ENCODE measurements at regions of chr12 and their contacts with region 1.

Region 1: DNA sequence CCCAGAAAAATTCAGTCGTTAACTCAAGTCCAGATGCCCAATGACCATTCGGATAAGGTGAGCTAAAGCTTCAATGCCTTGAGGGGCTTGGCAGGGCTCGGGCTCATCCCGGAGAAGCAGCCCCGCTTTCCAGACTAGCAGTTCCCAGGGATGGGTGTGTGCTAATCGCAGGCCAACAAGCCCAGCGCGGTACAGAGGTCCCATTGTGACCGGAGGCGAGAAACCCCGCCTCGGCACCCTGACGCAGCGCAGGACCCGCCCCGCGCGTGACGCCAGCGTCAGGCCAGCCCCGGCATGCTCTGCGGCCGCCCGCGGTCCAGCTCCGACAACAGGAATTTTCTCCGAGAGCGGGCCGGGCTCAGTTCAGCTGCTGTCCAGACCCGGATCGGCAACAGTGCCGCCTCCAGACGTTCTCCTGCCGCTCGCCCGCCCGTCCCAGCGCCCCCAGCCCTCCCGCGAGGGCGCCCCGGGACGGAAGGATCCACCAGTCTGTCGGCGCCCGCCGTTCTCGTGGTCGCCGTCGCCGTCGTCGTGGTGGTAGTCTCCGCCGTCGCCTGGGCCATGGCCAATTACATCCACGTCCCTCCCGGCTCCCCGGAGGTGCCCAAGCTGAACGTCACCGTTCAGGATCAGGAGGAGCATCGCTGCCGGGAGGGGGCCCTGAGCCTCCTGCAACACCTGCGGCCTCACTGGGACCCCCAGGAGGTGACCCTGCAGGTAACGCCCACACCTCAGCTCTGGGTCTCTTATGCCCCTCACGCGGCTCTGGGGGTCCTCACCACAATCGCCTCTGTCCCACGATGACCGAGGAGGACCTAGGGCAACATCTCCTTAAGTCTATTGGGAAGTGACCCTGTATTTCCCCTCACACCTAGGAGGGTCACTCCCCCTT is at the start of gene ETNK1:
- DNase-seq: peak; percentile 70 to 90 (median 83)
- ATAC-seq: peak; percentile 93
- H3K4me3 ChIP-seq: peak within 1 kb of the TSS; percentile 84 to 98
- H3K4me3 Mint-ChIP-seq: peak within 1 kb of the TSS; percentile 99
- H3K27ac ChIP-seq: peak within 1 kb of the TSS; percentile 82 to 93
- H3K27ac Mint-ChIP-seq: peak within 1 kb of the TSS; percentile 99
- H3K4me1 ChIP-seq: peaks cover 28% of the 10 kb centered on the region
- H3K4me1 Mint-ChIP-seq: peaks cover 44% of the 10 kb centered on the region
- H3K27me3 ChIP-seq: peaks cover 0 to 2% of the 10 kb centered on the region in 2 experiments
- H3K27me3 Mint-ChIP-seq: peaks cover 2% of the 10 kb centered on the region
- CTCF ChIP-seq: no peak
- total RNA-seq, gene ETNK1: 17.1 to 23.3 TPM

Region 2: GRCh38 chr12:21501379-21501956 is 1123.6 kb before region 1 on chr12 and contains the starts of genes GOLT1B and RECQL:
- CTCF ChIA-PET with region 1: no interaction called
- POLR2A ChIA-PET with region 1: no interaction called
- intact Hi-C with region 1: loop called in 1 of 2 experiments (anchors 10 kb)
- DNase-seq: peak; percentile 74 to 98 (median 88)
- ATAC-seq: peak; percentile 94
- H3K4me3 ChIP-seq: peak within 1 kb of the TSS; percentile 89 to 95
- H3K4me3 Mint-ChIP-seq: no peak within 1 kb of the TSS
- H3K27ac ChIP-seq: peak within 1 kb of the TSS; percentile 83 to 84
- H3K27ac Mint-ChIP-seq: no peak within 1 kb of the TSS
- H3K4me1 ChIP-seq: peaks cover 35% of the 10 kb centered on the region
- H3K4me1 Mint-ChIP-seq: peaks cover 60% of the 10 kb centered on the region
- H3K27me3 ChIP-seq: no peaks in the 10 kb centered on the region
- H3K27me3 Mint-ChIP-seq: no peaks in the 10 kb centered on the region
- CTCF ChIP-seq: no peak
- total RNA-seq, gene GOLT1B: 45.2 to 52.9 TPM
- total RNA-seq, gene RECQL: 9.9 to 14.6 TPM

Region 3: GRCh38 chr12:21690704-21691368 is 934.3 kb before region 1 on chr12:
- CTCF ChIA-PET with region 1: interaction called, 3 read pairs
- POLR2A ChIA-PET with region 1: no interaction called
- intact Hi-C with region 1: loop called in 1 of 2 experiments (anchors 5 kb)
- DNase-seq: peak in 2 of 9 experiments; percentile 18 to 44
- ATAC-seq: peak; percentile 54
- H3K4me3 ChIP-seq: no peak overlapping the region
- H3K4me3 Mint-ChIP-seq: peak overlapping the region; percentile 0
- H3K27ac ChIP-seq: peak overlapping the region in 1 of 2 experiments; percentile 43
- H3K27ac Mint-ChIP-seq: peak overlapping the region; percentile 64
- H3K4me1 ChIP-seq: peaks cover 20% of the 10 kb centered on the region
- H3K4me1 Mint-ChIP-seq: peaks cover 26% of the 10 kb centered on the region
- H3K27me3 ChIP-seq: no peaks in the 10 kb centered on the region
- H3K27me3 Mint-ChIP-seq: no peaks in the 10 kb centered on the region
- CTCF ChIP-seq: no peak

Region 4: DNA sequence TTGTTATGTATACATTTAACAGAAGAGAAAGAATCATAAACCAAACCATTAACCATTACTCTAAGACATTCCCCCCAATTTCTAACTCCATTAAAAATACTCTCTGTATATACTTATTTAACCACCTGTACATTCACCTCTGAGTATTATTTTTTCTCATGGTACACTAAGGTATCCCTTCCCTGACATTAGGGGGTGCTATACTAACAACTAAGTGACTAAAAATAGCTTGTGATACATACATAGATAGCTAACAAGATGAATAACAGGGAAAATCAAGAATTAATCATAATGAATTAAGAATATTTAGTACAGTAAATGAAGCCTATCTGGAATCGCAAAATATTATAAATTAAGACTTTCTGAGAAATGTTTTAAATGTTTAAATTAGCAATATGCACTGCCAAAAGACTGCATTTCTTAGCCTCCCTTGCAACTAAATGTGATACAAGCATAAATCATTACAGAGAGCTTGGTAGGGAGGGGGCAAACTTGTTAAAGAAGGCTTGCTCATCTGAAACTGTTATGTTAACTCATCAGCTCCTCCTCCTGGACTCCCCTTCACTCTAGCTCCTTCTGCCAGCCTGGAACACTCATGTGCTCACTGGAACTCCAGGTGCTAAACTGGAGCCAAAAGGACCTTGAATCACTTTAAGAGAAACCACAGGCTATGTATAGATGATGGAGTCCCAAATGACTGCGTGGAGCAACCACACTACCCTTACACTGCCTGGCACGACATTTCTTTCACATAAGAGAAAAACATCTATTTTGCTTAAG is 95.6 kb before region 1 on chr12:
- CTCF ChIA-PET with region 1: interaction called, 5 read pairs
- POLR2A ChIA-PET with region 1: interaction called, 3 read pairs
- intact Hi-C with region 1: loop called (anchors 1 kb)
- DNase-seq: peak in 2 of 9 experiments; percentile 45 to 65
- ATAC-seq: peak; percentile 89
- H3K4me3 ChIP-seq: no peak overlapping the region
- H3K4me3 Mint-ChIP-seq: no peak overlapping the region
- H3K27ac ChIP-seq: no peak overlapping the region
- H3K27ac Mint-ChIP-seq: no peak overlapping the region
- H3K4me1 ChIP-seq: no peaks in the 10 kb centered on the region
- H3K4me1 Mint-ChIP-seq: peaks cover 12% of the 10 kb centered on the region
- H3K27me3 ChIP-seq: no peaks in the 10 kb centered on the region
- H3K27me3 Mint-ChIP-seq: no peaks in the 10 kb centered on the region
- CTCF ChIP-seq: peak; percentile 66

Region 5: DNA sequence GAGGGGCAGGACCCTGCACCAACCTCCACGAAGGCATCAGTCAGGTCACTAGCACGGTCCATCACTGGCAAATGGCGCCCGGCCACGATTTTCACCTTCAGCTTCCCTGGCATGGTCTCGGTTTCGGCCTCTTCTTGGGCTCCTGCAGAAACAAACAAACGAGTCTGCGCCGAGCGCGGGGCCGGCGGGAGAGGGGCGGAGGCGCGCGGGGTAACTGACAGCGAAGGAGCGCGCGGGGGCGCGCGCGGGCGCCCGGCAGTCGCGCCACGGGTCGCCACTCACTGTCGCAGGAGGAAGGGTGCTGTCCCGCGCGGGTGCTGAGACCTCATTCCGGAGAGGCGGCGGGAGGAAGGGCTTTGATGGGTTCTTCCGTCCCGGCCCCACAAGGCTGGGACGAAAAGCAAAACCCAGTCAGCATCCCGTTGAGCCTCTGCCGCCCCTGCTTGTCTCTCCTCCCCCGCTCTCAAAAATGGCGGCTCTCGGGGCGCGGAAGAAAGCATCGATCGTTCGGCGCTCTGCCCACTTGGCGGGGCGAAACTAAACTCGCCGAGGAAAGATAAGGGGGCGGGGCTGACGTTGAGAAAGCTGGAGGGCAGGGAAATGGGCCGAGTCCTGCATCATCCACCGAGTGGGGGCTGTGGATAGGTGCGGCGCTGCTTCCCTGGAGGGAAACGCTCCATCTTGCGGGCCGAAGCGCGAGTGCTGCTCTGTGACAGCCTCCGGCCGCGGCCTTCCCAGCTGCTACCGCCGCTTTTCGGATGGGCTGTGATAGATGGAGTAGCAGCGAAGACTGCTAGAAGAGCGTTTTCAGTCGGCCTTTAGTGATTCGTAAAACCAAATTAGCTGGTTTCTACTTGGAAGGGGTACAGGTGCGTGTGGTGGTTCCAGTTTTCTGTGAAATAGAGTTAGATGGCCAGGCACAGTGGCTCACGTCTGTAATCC is 80.8 kb before region 1 on chr12 and contains the start of gene C2CD5:
- CTCF ChIA-PET with region 1: interaction called, 3 read pairs
- POLR2A ChIA-PET with region 1: interaction called, 15 read pairs
- intact Hi-C with region 1: loop called (anchors 1 to 5 kb)
- DNase-seq: peak; percentile 92 to 99 (median 95)
- ATAC-seq: peak; percentile 91
- H3K4me3 ChIP-seq: peak within 1 kb of the TSS; percentile 79 to 99
- H3K4me3 Mint-ChIP-seq: peak within 1 kb of the TSS; percentile 94
- H3K27ac ChIP-seq: peak within 1 kb of the TSS; percentile 92
- H3K27ac Mint-ChIP-seq: peak within 1 kb of the TSS; percentile 94
- H3K4me1 ChIP-seq: peaks cover 25% of the 10 kb centered on the region
- H3K4me1 Mint-ChIP-seq: peaks cover 38% of the 10 kb centered on the region
- H3K27me3 ChIP-seq: no peaks in the 10 kb centered on the region
- H3K27me3 Mint-ChIP-seq: no peaks in the 10 kb centered on the region
- CTCF ChIP-seq: peak; percentile 16
- total RNA-seq, gene C2CD5: 19.5 to 24.4 TPM

Region 6: GRCh38 chr12:22787557-22787956 is 162.4 kb after region 1 on chr12:
- CTCF ChIA-PET with region 1: no interaction called
- POLR2A ChIA-PET with region 1: no interaction called
- intact Hi-C with region 1: no loop called
- DNase-seq: no peak
- ATAC-seq: no peak
- H3K4me3 ChIP-seq: no peak overlapping the region
- H3K4me3 Mint-ChIP-seq: no peak overlapping the region
- H3K27ac ChIP-seq: no peak overlapping the region
- H3K27ac Mint-ChIP-seq: no peak overlapping the region
- H3K4me1 ChIP-seq: no peaks in the 10 kb centered on the region
- H3K4me1 Mint-ChIP-seq: no peaks in the 10 kb centered on the region
- H3K27me3 ChIP-seq: no peaks in the 10 kb centered on the region
- H3K27me3 Mint-ChIP-seq: peaks cover 2% of the 10 kb centered on the region
- CTCF ChIP-seq: no peak